A549 (cell line): ENCODE measurements at regions of chr17 and their contacts with region 1.

Region 1: GRCh38 chr17:50244771-50245170 is 29.5 kb upstream of the TMEM92 start:
- DNase-seq: no peak
- ATAC-seq: no peak
- H3K4me3 ChIP-seq: no peak overlapping the region
- H3K27ac ChIP-seq: no peak overlapping the region
- H3K4me1 ChIP-seq: no peaks in the 10 kb centered on the region
- CTCF ChIP-seq: no peak
- EP300 ChIP-seq: no peak
- POLR2A ChIP-seq: no peak
- RAD21 ChIP-seq: no peak

Region 2: GRCh38 chr17:50258647-50259476 is 14.1 kb after region 1 on chr17:
- CTCF ChIA-PET with region 1: interaction called, 20 read pairs
- POLR2A ChIA-PET with region 1: no interaction called
- DNase-seq: no peak
- ATAC-seq: no peak
- H3K4me3 ChIP-seq: no peak overlapping the region
- H3K27ac ChIP-seq: no peak overlapping the region; a peak in 1 of 6 replicates
- H3K4me1 ChIP-seq: 0 out of 3 replicates have a peak, but pooled peaks cover 3% of the 10 kb centered on the region
- CTCF ChIP-seq: no peak
- EP300 ChIP-seq: no peak
- POLR2A ChIP-seq: no peak
- RAD21 ChIP-seq: no peak